GM10248 (cell line): ENCODE measurements at regions of chr1 and their contacts with region 1.

Region 1: GRCh38 chr1:204128964-204129896 is 22.6 kb downstream of the ETNK2 start:
- DNase-seq: peak; percentile 91
- CTCF ChIP-seq: peak; percentile 94

Region 2: DNA sequence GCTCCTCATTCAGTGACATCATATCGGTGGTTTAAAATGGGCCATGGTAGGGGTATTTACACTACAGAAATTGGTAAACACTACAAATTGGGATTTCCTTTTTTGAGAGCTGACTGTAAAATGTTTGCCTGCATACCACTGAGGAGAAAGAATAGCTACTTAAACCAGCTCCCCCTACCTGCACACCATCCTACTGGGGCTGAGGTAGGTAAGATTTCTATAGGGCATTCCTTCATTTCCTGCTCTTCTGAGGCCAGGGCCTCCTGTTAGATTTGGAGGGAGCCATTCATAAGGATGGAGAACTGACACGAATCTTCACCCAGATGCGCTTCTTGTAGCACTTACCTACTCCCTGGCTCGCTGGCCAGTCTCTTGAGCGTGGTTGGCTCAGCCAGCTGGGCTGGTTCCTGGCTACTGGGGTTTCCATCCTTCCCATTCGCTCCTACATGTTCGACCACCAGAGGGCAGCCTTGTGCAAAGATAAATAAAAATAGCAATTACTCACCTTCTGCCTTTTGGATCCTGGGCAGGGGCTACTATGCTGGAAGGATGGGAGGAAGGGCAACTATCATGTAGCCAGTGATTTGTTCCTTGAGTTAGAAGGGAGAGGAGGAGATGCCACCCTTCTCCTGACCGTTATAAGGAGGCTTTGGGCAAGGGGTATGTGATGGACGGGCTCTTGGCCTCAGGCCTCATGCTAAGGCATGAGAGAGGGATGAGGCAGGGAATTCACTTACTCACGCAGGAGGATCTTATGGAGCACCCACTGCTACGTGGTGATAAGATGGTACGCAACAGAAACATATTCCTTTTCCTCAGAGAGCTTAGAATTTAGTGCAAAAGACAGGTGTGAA is 624.6 kb before region 1 on chr1:
- CTCF ChIA-PET with region 1: interaction called, 12 read pairs
- POLR2A ChIA-PET with region 1: no interaction called
- DNase-seq: peak; percentile 82
- CTCF ChIP-seq: peak; percentile 84

Region 3: DNA sequence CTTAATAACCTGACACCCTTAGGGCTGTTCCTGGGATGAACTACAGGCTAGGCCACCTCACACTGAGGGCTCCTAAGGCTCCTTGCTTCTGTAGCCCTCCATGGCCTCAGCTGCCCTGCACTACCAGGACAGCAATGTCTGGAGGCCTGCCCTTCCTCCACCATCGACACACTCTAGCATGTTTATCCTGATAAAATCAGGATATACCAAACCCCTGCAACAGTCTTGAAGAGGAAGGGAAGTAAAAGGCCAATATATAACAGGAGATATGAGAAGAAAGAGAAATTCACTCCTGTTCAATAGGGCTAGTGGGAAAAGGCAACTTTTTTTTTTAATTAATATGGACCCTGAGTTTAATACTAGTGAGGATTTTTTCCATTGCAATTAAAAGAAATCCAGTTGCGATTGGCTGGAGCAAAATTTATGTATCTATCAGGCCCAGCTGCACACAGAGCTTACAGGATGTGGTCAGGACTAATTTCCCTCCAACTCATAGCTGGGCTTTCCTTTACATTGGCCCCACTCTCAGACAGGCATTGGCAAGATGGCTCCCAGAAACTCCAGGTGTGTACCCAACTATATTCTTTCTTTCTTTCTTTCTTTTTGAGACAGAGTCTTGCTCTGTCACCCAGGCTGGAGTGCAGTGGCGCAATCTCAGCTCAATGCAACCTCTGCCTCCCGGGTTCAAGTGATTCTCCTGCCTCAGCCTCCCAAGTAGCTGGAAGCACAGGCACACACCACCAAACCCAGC is 516.1 kb before region 1 on chr1:
- CTCF ChIA-PET with region 1: no interaction called
- POLR2A ChIA-PET with region 1: no interaction called
- DNase-seq: no peak
- CTCF ChIP-seq: no peak

Region 4: GRCh38 chr1:203861379-203862184 is 267.6 kb before region 1 on chr1 and contains the start of gene SNRPE:
- CTCF ChIA-PET with region 1: interaction called, 31 read pairs
- POLR2A ChIA-PET with region 1: no interaction called
- DNase-seq: peak; percentile 96
- CTCF ChIP-seq: peak; percentile 97

Region 5: GRCh38 chr1:203871107-203871875 is 257.9 kb before region 1 on chr1:
- CTCF ChIA-PET with region 1: interaction called, 48 read pairs
- POLR2A ChIA-PET with region 1: no interaction called
- DNase-seq: peak; percentile 32
- CTCF ChIP-seq: peak; percentile 58

Region 6: GRCh38 chr1:203937644-203938330 is 191.4 kb before region 1 on chr1:
- CTCF ChIA-PET with region 1: no interaction called
- POLR2A ChIA-PET with region 1: no interaction called
- DNase-seq: no peak
- CTCF ChIP-seq: no peak

Region 7: GRCh38 chr1:204096931-204097330 is 32.3 kb before region 1 on chr1:
- CTCF ChIA-PET with region 1: no interaction called
- POLR2A ChIA-PET with region 1: no interaction called
- DNase-seq: no peak
- CTCF ChIP-seq: no peak

Region 8: DNA sequence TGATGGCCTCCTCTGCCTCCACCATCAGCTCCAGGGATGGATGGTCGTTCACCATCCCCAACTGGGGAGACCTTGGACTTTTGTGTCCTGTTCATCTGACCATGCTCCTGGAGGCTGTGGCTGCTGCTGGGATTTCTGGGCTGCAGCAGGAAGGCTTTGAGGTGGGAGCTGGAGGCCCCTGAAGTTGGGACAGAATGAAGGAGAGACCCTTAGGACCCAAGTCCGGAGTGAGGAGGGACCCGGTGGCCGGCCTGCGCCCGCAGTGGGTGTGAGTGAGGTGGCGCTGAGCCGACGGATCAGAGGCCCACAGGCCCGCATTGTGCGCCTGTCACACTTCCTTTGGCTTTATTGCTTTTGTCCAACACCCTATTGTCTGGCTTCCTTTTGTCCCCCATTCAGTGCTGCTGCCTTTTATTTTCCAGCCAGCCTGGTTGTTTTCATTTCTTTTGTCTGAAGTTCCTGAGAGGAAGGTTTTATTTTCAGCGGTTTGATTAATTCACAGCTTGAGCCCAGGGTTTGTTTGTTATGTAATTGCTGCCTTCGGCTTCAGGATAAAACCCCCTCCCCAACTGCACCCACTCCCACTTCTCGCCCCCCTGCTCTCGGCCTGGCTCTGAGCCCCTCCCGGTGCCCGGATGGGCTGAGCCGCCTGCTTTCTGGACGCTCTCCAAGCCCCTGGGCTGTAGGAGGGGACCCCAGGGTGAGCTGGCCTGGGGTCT is 20.6 kb before region 1 on chr1:
- CTCF ChIA-PET with region 1: interaction called, 15 read pairs
- POLR2A ChIA-PET with region 1: no interaction called
- DNase-seq: no peak
- CTCF ChIP-seq: no peak

Region 9: DNA sequence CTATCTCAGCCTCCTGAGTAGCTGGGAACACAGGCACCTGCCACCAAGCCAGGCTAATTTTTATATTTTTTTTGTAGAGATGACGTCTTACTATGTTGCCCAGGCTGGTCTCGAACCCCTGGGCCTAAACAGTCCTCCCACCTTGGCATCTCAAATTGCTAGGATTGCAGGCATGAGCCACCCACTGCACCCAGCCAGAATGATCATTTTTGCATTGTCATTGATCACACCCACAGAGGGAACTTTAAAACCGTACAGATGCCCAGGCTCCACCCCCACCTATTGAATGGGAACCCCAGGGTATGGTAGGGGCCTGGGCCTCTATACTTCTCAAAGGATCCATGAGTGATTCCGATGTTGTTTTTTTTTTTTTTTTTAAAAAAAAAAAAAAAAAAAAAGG is 14.1 kb before region 1 on chr1:
- CTCF ChIA-PET with region 1: interaction called, 20 read pairs
- POLR2A ChIA-PET with region 1: no interaction called
- DNase-seq: no peak
- CTCF ChIP-seq: no peak

Region 10: DNA sequence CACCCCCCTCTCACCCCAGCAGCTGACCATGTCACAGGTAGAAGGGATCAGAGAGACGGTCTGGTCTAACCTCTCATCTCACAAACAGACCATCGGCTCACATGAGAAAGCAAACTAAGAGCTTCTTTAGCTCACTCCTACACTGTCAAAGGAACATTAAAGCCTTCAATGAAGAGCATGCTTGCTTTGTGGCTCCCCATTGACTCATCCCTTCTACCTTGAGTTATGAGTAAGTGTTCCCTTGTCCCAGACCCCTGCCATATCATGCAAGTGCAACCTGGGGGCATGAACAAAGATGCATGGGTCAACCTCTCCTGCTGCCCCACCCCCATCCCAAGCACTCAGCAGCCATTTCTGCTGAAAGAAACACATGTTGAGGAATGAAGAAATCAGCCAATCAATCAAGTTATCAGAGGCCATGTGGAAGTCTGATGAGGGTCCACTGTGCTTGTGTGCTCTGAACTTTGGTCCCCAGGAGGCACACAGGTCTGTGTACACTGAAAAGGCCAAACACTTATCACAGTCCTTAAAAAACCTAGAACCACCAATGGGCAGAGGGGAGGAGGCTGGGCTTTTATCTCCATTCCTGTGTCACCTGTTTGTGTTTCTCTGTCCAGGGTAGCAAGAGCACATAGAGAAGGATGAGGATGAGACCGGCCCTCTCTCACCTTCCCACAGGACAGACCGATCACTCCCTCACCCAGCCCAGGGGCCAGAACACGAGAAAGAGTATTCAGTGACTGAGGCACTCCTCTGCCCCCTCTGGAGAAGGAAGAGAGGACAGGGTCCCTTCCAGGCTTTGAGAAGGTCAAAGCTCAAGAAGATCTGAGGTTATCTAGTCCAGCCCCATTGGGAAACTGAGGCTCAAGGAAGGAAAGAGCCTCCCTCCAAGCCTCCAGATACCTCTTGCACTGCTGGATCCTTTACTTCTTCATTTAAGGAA is 13.1 kb after region 1 on chr1:
- CTCF ChIA-PET with region 1: interaction called, 47 read pairs
- POLR2A ChIA-PET with region 1: no interaction called
- DNase-seq: no peak
- CTCF ChIP-seq: no peak